ENCODE measurements at regions of chr9 and their contacts with region 1.

Region 1: GRCh38 chr9:127004946-127005769 is 90.6 kb downstream of the RALGPS1 start:
- DNase-seq: peak; percentile 75
- H3K4me3 Mint-ChIP-seq: peak overlapping the region; percentile 50
- H3K27ac Mint-ChIP-seq: peak overlapping the region; percentile 72
- H3K4me1 Mint-ChIP-seq: peaks cover 47% of the 10 kb centered on the region
- H3K27me3 Mint-ChIP-seq: peaks cover 10% of the 10 kb centered on the region

Region 2: GRCh38 chr9:126974594-126974993 is 30.6 kb before region 1 on chr9:
- intact Hi-C with region 1: loop called (anchors 5 kb)
- DNase-seq: no peak
- H3K4me3 Mint-ChIP-seq: no peak overlapping the region
- H3K27ac Mint-ChIP-seq: no peak overlapping the region
- H3K4me1 Mint-ChIP-seq: peaks cover 23% of the 10 kb centered on the region
- H3K27me3 Mint-ChIP-seq: peaks cover 36% of the 10 kb centered on the region

Region 3: DNA sequence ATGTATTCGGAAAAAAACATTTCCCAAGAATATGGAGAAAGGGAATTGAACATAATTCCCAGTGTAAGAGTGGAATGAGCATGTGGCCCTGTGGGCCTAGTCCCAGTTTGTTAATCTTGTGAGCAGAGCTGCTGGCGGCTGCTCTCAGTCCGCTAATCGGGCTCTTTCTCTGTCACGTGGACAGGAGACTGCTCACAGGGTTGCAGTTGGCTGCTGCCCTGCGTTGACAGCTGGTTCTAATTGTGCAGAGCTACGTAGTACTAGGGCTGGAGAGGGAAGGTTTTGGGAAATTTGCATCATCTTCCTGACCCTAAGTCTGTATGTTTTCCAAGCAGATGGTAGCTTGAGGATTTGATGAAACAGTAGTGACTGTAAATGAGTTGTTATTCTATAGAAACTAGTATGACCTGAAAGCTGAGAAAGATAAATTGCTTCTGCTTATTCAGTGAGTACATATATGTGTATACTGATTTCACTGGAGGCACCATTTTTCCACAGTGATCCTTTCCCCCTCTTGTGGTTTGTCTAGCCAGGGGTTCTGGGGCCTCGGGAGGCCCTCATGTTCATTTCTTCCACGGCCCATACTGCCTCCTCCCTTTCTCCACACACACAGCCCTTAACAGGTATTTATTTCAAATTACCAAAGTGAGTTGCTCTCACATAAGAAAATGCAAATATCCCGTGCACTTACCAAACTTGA is 16.7 kb after region 1 on chr9:
- intact Hi-C with region 1: no loop called
- DNase-seq: no peak
- H3K4me3 Mint-ChIP-seq: no peak overlapping the region
- H3K27ac Mint-ChIP-seq: no peak overlapping the region
- H3K4me1 Mint-ChIP-seq: peaks cover 15% of the 10 kb centered on the region
- H3K27me3 Mint-ChIP-seq: peaks cover 27% of the 10 kb centered on the region

Region 4: GRCh38 chr9:127049044-127049443 is 43.9 kb after region 1 on chr9:
- intact Hi-C with region 1: loop called (anchors 1 kb)
- DNase-seq: peak; percentile 52
- H3K4me3 Mint-ChIP-seq: peak overlapping the region; percentile 53
- H3K27ac Mint-ChIP-seq: peak overlapping the region; percentile 71
- H3K4me1 Mint-ChIP-seq: peaks cover 52% of the 10 kb centered on the region
- H3K27me3 Mint-ChIP-seq: peaks cover 6% of the 10 kb centered on the region

Region 5: GRCh38 chr9:127104465-127105311 is 99.5 kb after region 1 on chr9:
- intact Hi-C with region 1: no loop called
- DNase-seq: no peak
- H3K4me3 Mint-ChIP-seq: no peak overlapping the region
- H3K27ac Mint-ChIP-seq: no peak overlapping the region
- H3K4me1 Mint-ChIP-seq: no peaks in the 10 kb centered on the region
- H3K27me3 Mint-ChIP-seq: peaks cover 22% of the 10 kb centered on the region

Region 6: DNA sequence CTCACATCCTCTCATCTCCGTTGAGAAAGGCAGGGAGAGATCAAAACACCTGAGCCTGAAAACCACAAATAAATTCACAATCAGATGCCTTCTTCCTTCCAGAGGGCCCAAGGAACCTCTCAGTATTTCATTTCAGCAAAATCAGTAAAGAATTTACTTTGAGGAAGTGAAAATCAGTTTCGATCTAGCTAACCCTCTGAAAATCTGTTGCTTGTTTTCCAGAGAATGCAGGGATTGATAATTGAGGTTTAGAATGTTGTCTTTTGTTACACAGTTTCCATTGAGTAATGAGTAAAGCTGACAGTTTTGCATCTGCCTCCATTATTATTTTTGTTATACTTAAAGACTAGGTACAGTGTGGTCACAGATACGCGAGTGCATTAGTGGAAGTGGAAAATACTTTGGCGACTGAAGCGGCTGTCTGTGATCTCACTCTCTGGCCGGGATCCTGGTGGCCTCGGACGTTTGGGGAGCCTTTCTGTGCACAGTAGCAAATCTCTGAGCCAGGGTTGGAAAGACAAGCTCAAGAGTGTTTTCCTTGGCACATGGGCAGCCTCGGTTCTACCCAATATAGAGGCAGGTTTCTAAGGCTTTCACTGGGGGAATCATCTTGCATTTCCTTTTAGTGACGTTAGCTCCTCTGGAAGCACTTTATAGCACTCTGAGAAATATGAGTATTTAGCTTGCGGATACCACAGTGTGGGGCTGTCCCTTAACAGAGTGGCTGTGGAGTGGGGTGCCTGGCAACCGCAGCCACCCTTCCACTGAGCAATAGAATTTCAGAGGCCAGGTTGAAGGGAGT is 149.4 kb after region 1 on chr9:
- intact Hi-C with region 1: loop called (anchors 1 kb)
- DNase-seq: no peak
- H3K4me3 Mint-ChIP-seq: no peak overlapping the region
- H3K27ac Mint-ChIP-seq: peak overlapping the region; percentile 22
- H3K4me1 Mint-ChIP-seq: peaks cover 20% of the 10 kb centered on the region
- H3K27me3 Mint-ChIP-seq: peaks cover 16% of the 10 kb centered on the region

Measured in activated T-helper 1 cell treated with anti-CD3 and anti-CD28 coated beads, Interleukin-12 subunit alpha, Interleukin-12 subunit beta, Interleukin-2, Interleukin-4 antibody, amounts not matched to agents 30 ng/mL and 10 ng/mL and 1 ng/mL, durations not matched to agents 14 hours and 24 hours and 36 hours (primary cell).